ENCODE measurements at regions of chr12 and their contacts with region 1.

Region 1: DNA sequence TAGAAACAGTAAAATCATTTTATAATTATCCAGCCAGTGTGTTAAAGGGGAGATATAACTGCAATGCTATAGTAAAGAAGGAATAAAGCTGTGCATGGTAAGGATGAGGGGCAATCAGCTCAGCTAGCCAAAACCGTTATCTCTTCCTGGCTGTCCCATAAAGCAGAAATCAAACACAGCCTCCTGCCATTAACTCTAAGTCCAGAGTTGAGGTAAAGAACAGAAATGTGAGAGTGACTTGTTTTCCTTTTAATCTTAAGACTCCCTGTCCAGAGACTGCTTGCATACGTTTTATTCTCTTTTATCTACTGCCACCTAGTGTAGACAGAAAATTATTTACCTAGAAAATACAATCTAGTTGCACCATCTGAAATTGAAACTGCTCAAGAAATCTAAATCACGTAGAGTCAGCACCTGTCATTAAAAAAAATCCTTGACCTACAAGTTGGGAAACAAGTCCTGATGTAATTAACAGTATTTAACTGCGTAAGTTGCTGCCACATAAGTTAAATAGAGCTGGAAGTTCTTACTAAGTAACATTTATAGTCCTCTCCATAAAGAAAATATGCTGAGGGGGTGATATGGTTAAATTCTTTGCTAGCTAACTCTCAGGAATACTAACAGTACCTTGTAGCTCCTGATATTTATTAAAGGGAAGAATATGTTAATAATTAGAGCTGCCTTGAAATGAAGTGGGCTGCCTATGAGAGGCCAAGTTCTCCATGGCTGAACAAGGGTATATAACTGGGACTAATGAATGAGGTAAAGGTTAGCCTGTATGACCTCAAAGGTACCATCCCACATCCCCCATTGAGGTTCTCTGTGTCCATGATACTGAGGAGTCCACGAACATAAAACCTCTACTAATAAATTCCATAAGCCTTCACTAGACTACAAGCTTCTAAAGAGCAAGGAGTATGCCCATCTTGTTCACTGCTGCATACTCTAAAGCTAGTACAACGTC is 62.7 kb downstream of the GALNT4 start:
- DNase-seq: no peak
- H3K4me3 Mint-ChIP-seq: peak overlapping the region; percentile 53
- H3K27ac Mint-ChIP-seq: peak overlapping the region; percentile 43
- H3K4me1 Mint-ChIP-seq: peaks cover 47% of the 10 kb centered on the region
- H3K27me3 Mint-ChIP-seq: no peaks in the 10 kb centered on the region

Region 2: DNA sequence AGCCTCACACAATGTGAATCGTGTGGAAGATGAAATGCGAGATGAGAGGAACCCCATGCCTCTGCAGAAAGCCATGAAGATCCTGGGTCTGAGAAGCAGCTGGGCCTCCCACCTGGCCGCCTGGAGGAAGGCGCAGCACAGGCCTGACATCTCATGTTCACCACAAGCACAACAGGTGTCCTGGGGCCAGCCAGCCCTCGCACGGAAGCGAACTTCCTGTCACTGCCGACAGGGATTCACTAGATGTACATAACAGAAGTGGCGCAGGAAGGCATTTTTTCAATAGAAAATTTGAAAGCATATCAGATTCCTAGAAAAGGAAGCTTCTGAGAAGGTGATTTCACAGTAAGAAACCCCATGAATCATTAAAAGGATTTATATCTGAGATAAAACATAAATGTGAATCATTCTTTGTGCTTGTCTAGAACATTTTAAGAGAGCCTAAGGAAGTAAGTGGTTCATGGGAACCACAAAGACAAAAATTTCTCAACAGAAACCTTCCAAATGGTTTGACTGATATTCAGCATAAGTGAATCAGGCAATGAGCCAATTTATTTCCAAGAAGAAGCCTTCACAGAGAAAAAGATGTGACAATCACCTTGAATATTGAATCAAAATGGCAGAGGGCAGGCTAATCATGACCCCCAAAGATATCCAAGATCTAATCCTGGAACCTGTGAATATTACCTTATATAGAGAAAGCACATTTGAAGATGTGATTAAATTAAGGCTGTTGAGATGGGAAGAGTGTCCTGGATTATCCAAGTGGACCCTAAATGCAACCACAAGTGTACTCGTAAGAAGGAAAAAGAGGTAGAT is 421.6 kb before region 1 on chr12:
- CTCF ChIA-PET with region 1: interaction called, 10 read pairs
- DNase-seq: peak; percentile 92
- H3K4me3 Mint-ChIP-seq: peak overlapping the region; percentile 10
- H3K27ac Mint-ChIP-seq: peak overlapping the region; percentile 91
- H3K4me1 Mint-ChIP-seq: peaks cover 59% of the 10 kb centered on the region
- H3K27me3 Mint-ChIP-seq: peaks cover 4% of the 10 kb centered on the region

Region 3: DNA sequence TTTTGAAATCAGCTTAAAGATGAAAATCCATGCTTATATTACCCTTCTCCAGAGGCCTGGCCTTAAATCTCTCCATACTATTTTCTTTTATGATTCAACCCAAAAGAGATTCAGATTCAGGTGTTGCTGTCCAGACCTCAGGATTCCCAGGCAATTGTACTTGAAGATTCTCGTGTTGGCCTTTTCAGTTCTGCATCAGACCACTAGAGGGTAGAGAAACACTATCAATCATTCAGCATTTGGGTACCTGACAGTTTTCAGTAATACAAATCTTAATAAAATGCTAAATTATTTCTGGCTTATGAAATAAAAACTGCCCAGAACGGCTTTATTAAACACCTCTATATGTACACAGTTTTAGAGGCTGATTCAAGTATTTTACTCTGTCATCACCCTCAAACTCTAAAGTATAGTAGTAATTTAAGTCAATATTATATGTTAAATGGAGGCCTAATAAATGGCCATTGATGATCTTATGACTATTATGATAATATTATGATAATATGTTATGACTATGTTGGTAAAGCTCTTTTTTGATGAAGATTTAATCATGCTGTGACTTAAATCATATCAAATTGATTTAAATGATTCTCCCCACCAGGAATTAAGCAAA is 410.8 kb before region 1 on chr12:
- CTCF ChIA-PET with region 1: interaction called, 15 read pairs
- DNase-seq: peak; percentile 24
- H3K4me3 Mint-ChIP-seq: no peak overlapping the region
- H3K27ac Mint-ChIP-seq: no peak overlapping the region
- H3K4me1 Mint-ChIP-seq: peaks cover 22% of the 10 kb centered on the region
- H3K27me3 Mint-ChIP-seq: no peaks in the 10 kb centered on the region

Region 4: GRCh38 chr12:89352492-89353187 is 109.3 kb before region 1 on chr12 and contains the start of gene DUSP6:
- CTCF ChIA-PET with region 1: interaction called, 18 read pairs
- DNase-seq: peak; percentile 98
- H3K4me3 Mint-ChIP-seq: peak within 1 kb of the TSS; percentile 99
- H3K27ac Mint-ChIP-seq: peak within 1 kb of the TSS; percentile 97
- H3K4me1 Mint-ChIP-seq: peaks cover 56% of the 10 kb centered on the region
- H3K27me3 Mint-ChIP-seq: peaks cover 7% of the 10 kb centered on the region

Measured in activated naive CD4-positive, alpha-beta T cell treated with anti-CD3 and anti-CD28 coated beads, Interleukin-2, amount 10 ng/mL, durations not matched to agents 7 days and 5 days (primary cell).